Activated CD4-positive, alpha-beta T cell treated with anti-CD3 and anti-CD28 coated beads, Interleukin-2, amount 10 ng/mL, durations not matched to agents 7 days and 5 days (primary cell): ENCODE measurements at regions of chr16 and their contacts with region 1.

Region 1: DNA sequence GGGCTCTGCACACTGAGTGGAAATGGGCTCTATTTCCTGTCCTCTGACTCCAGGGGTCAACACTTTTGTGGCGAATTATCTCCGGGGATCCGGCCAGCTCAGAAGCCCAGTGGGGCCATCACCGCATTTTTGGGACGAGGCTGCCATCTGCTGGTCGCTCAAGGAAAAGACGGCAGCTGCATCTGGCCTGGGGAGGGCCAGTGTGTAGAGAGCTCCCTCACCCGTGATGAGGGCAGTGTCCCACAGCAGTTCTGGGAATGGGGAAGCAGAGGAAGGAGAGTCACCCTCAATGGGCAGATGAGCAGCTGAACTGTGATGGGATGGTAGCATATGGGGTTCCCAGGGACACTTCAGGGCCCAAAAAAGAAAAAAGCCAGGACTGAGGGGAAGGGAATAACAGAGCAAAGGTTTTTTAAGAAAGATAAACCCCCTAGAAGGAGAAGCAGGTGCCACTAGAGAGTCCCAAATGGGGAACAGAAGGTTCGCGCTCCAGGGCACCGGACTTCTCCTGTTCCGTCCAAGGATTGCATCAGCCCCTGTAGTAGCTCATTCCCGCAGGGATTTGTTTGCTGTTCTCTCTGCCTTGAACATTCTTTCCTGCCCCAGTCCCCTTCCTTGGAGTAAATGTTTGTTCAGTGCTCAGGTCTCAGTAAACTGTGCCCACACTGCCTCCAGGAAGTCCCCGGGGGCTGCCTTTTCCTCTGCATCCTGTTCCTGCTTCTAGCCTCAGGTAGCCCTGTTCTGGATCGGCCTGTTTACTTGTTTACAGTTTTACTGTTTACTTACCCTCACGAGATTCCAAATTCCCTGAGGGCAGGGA is 9.3 kb upstream of the ABCC12 start:
- DNase-seq: peak; percentile 62
- H3K4me3 Mint-ChIP-seq: no peak overlapping the region
- H3K27ac Mint-ChIP-seq: no peak overlapping the region
- H3K4me1 Mint-ChIP-seq: peaks cover 14% of the 10 kb centered on the region
- H3K27me3 Mint-ChIP-seq: peaks cover 4% of the 10 kb centered on the region

Region 2: GRCh38 chr16:47037746-47038458 is 1127.2 kb before region 1 on chr16:
- CTCF ChIA-PET with region 1: interaction called, 10 read pairs
- POLR2A ChIA-PET with region 1: no interaction called
- DNase-seq: peak; percentile 88
- H3K4me3 Mint-ChIP-seq: peak overlapping the region; percentile 73
- H3K27ac Mint-ChIP-seq: no peak overlapping the region
- H3K4me1 Mint-ChIP-seq: peaks cover 5% of the 10 kb centered on the region
- H3K27me3 Mint-ChIP-seq: peaks cover 9% of the 10 kb centered on the region

Region 3: DNA sequence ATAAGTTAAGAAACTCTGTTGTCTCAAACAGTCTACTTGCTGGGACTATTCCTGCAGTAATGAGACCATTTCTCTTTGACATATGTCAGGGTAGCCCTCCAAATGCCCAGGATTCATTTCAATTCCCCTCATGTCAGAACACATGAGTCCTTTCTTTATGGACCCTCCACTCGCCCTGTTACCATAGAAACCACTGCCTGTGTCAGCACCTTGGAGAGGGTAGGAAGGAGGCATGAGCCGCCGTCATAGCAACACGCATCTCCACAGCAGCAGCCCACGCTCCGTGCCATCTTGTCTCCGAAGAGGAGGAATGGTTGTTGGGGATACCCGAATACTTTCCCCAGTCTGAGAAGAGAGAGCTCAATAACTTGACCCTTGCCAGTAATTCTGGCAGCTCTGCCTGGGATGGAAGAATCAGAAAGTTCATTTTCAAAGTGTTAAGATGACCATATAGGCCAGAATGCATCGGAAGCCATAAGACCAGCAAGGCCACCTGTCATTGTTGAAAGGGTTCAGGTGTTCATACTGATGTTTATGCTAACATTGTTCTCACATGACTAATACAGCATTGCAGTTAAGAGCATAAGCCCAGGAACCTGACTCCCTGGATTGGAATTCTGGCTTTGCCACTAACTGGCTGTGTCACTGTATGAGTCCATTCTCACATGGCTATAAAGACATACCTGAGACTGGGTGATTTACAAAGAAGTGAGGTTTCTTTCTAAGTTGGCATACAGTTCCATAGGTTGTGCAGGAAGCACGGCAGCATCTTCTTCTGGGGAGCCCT is 150.6 kb before region 1 on chr16:
- CTCF ChIA-PET with region 1: no interaction called
- POLR2A ChIA-PET with region 1: no interaction called
- DNase-seq: no peak
- H3K4me3 Mint-ChIP-seq: no peak overlapping the region
- H3K27ac Mint-ChIP-seq: no peak overlapping the region
- H3K4me1 Mint-ChIP-seq: no peaks in the 10 kb centered on the region
- H3K27me3 Mint-ChIP-seq: no peaks in the 10 kb centered on the region

Region 4: GRCh38 chr16:48146710-48147109 is 18.4 kb before region 1 on chr16:
- CTCF ChIA-PET with region 1: no interaction called
- POLR2A ChIA-PET with region 1: no interaction called
- DNase-seq: no peak
- H3K4me3 Mint-ChIP-seq: no peak overlapping the region
- H3K27ac Mint-ChIP-seq: no peak overlapping the region
- H3K4me1 Mint-ChIP-seq: no peaks in the 10 kb centered on the region
- H3K27me3 Mint-ChIP-seq: peaks cover 9% of the 10 kb centered on the region

Region 5: GRCh38 chr16:48231727-48232492 is 66.8 kb after region 1 on chr16:
- CTCF ChIA-PET with region 1: no interaction called
- POLR2A ChIA-PET with region 1: no interaction called
- DNase-seq: peak; percentile 61
- H3K4me3 Mint-ChIP-seq: no peak overlapping the region
- H3K27ac Mint-ChIP-seq: peak overlapping the region; percentile 81
- H3K4me1 Mint-ChIP-seq: peaks cover 22% of the 10 kb centered on the region
- H3K27me3 Mint-ChIP-seq: no peaks in the 10 kb centered on the region

Region 6: DNA sequence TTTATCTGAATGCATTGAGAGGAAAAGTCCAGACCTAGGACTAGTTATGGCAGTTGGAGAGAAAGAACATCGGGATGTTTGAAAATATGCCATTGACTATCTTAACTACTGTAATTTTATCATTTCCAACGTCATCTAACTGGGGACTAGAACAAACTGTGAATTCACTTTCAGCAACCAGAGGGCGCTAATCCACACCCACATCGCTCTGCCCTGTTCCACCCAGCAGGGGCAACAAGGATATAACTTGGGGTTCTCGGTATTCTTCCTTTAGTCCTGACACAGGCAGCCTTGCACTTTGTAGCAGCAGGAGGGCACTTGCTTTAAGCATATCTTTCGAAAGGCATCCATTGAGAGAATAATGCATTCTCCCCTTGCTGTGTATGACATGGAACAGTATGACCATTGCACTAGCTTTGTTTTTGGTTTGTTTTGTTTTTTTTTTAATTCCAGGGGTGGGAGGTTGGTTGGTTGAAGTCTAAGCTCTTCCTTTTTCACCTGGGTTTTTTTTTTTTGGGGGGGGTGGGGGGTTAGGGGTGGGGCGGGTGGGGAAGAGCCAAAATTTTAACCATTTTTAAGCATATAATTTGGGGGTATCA is 188.5 kb after region 1 on chr16:
- CTCF ChIA-PET with region 1: no interaction called
- POLR2A ChIA-PET with region 1: no interaction called
- DNase-seq: peak; percentile 76
- H3K4me3 Mint-ChIP-seq: no peak overlapping the region
- H3K27ac Mint-ChIP-seq: peak overlapping the region; percentile 72
- H3K4me1 Mint-ChIP-seq: peaks cover 9% of the 10 kb centered on the region
- H3K27me3 Mint-ChIP-seq: no peaks in the 10 kb centered on the region